B cell (primary cell): ENCODE measurements at regions of chr13 and their contacts with region 1.

Region 1: GRCh38 chr13:101514788-101515187 is 62.3 kb downstream of the ITGBL1 start:
- DNase-seq: peak; percentile 49
- ATAC-seq: no peak
- H3K4me3 ChIP-seq: no peak overlapping the region
- H3K4me3 Mint-ChIP-seq: no peak overlapping the region
- H3K27ac ChIP-seq: no peak overlapping the region
- H3K27ac Mint-ChIP-seq: no peak overlapping the region
- H3K4me1 ChIP-seq: no peaks in the 10 kb centered on the region
- H3K4me1 Mint-ChIP-seq: no peaks in the 10 kb centered on the region
- H3K27me3 ChIP-seq: no peaks in the 10 kb centered on the region
- H3K27me3 Mint-ChIP-seq: no peaks in the 10 kb centered on the region
- CTCF ChIP-seq: peak; percentile 78

Region 2: DNA sequence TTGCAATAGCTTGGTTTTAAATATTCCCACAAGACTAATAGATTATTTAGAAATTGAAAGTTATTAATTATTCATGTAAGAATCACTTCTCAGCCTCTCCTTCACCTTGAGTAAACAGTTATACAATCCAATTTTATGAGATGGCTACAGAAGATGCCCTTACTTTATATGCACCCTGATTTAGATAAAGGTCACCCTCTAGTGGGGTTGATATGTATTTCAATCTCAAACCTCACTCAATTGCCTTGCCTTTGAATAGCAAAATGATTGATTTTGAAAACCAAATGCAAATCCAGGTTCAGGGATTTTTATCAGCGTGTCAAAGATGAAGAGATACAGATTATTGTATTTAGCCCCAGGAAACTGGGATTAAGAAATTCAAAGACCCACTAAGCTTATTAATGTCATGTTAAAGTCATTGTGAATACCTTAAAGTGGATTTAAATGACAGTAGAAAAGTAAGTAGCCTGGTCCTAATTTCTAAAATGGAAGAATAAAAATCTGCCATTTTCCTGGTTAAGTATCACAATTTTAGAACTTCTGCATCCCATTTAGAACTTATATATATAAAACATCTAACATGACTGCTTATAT is 242.8 kb after region 1 on chr13:
- CTCF ChIA-PET with region 1: interaction called, 20 read pairs
- POLR2A ChIA-PET with region 1: no interaction called
- intact Hi-C with region 1: no loop called
- DNase-seq: peak; percentile 44
- ATAC-seq: no peak
- H3K4me3 ChIP-seq: no peak overlapping the region
- H3K4me3 Mint-ChIP-seq: no peak overlapping the region
- H3K27ac ChIP-seq: no peak overlapping the region
- H3K27ac Mint-ChIP-seq: no peak overlapping the region
- H3K4me1 ChIP-seq: no peaks in the 10 kb centered on the region
- H3K4me1 Mint-ChIP-seq: no peaks in the 10 kb centered on the region
- H3K27me3 ChIP-seq: peaks cover 0 to 3% (median 0%) of the 10 kb centered on the region in 4 experiments
- H3K27me3 Mint-ChIP-seq: peaks cover 3% of the 10 kb centered on the region
- CTCF ChIP-seq: peak; percentile 64

Region 3: GRCh38 chr13:102555917-102556553 is 1041.2 kb after region 1 on chr13:
- CTCF ChIA-PET with region 1: interaction called, 12 read pairs
- POLR2A ChIA-PET with region 1: no interaction called
- intact Hi-C with region 1: no loop called
- DNase-seq: peak; percentile 27
- ATAC-seq: no peak
- H3K4me3 ChIP-seq: no peak overlapping the region
- H3K4me3 Mint-ChIP-seq: no peak overlapping the region
- H3K27ac ChIP-seq: no peak overlapping the region
- H3K27ac Mint-ChIP-seq: no peak overlapping the region
- H3K4me1 ChIP-seq: no peaks in the 10 kb centered on the region
- H3K4me1 Mint-ChIP-seq: no peaks in the 10 kb centered on the region
- H3K27me3 ChIP-seq: peaks cover 0 to 3% (median 0%) of the 10 kb centered on the region in 4 experiments
- H3K27me3 Mint-ChIP-seq: peaks cover 10% of the 10 kb centered on the region
- CTCF ChIP-seq: peak; percentile 51